Sigmoid colon (tissue), 7 donors: ENCODE measurements at regions of chr1 and their contacts with region 1.

Region 1: GRCh38 chr1:63615768-63616420 is 22.7 kb downstream of the PGM1 start:
- DNase-seq: peak; percentile 73
- H3K4me3 ChIP-seq: no peak overlapping the region
- H3K27ac ChIP-seq: no peak overlapping the region
- H3K4me1 ChIP-seq: peaks cover 0 to 17% (median 4%) of the 10 kb centered on the region in 4 donors
- H3K27me3 ChIP-seq: no peaks in the 10 kb centered on the region
- CTCF ChIP-seq: peak; percentile 48 to 77 (median 72)
- EP300 ChIP-seq: no peak
- POLR2A ChIP-seq: no peak

Region 2: GRCh38 chr1:63522891-63523728 is 92.8 kb before region 1 on chr1 and contains the starts of genes EFCAB7 and ITGB3BP:
- intact Hi-C with region 1: no loop called
- DNase-seq: peak; percentile 93
- H3K4me3 ChIP-seq: peak within 1 kb of the TSS; percentile 65 to 70 (median 66)
- H3K27ac ChIP-seq: peak within 1 kb of the TSS; percentile 86 to 92 (median 90)
- H3K4me1 ChIP-seq: peaks cover 0 to 20% (median 19%) of the 10 kb centered on the region in 4 donors
- H3K27me3 ChIP-seq: no peaks in the 10 kb centered on the region
- CTCF ChIP-seq: no peak
- EP300 ChIP-seq: no peak
- POLR2A ChIP-seq: no peak
- total RNA-seq, gene EFCAB7: 6.9 to 12.8 (median 10.4) TPM
- total RNA-seq, gene ITGB3BP: 9.4 to 25.3 (median 15.1) TPM

Region 3: DNA sequence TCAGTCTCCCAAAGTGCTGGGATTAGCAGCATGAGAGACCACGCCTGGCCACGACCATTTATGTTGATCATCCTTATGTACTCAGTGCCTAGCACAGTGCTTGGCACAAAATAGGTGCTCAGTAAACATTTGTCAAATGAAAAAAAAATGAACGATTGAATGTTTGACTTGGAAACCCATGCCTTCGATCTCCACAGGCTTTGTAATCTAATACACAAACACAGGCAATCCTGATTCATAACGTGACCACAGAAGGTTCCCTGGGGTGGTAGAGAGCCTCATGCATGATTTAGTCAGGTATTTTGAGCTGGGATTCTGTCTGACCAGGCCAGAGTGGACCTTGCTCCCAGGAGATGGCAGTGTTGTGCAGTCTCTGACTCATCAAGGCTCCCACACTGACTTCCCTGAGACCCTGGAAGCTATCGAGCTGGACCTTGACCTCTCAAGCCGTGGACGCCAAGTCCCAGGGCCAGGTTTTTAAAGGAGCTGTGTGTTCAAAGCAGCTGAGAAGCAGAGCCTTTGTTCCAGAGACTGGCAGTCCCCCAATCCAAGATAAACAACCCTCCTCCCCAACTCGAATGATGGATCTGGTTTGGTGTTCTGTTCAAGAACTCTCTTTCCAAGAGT is 58.5 kb after region 1 on chr1:
- intact Hi-C with region 1: loop called (anchors 5 kb)
- DNase-seq: peak; percentile 96
- H3K4me3 ChIP-seq: no peak overlapping the region
- H3K27ac ChIP-seq: peak overlapping the region in 3 of 4 donors; percentile 1 to 61 (median 56)
- H3K4me1 ChIP-seq: peaks cover 0 to 19% (median 12%) of the 10 kb centered on the region in 4 donors
- H3K27me3 ChIP-seq: no peaks in the 10 kb centered on the region
- CTCF ChIP-seq: peak; percentile 57 to 70 (median 68)
- EP300 ChIP-seq: no peak
- POLR2A ChIP-seq: no peak

Region 4: DNA sequence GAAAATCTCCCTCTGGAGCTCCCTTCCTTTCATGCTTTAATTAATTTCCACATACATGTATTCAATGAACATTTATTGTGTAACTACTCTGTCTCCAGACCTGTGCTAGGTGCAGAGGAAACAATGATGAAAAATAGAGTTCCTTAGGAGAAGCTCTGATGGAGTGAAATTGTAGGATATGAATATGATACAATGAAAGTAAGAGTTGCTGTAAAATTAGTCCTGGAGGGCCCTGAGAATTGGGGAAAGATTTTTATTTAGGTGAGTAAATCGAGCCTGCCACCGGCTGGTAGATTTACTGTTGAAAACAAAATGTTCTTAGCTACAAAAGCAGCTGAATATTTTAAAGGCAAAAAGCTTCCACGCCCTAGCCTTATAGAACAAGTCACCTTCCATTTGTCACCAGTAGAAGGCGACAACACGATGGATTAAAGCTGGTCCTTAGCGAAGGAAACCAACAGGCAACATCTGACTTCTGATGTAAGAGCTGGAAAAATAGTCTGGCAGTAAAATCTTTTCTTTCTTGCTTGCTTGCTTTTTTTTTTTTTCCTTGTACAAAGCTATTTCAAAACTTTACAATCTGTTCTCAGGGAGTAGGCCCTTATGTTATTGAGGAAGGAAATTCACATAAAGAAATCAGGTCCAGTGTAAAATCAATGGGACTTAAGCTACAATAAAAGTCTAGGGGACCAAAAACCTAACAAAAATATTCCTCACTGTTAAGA is 76.0 kb after region 1 on chr1:
- intact Hi-C with region 1: loop called (anchors 5 kb)
- DNase-seq: peak; percentile 84
- H3K4me3 ChIP-seq: no peak overlapping the region
- H3K27ac ChIP-seq: peak overlapping the region in 3 of 4 donors; percentile 57 to 74 (median 60)
- H3K4me1 ChIP-seq: peaks cover 0 to 30% (median 20%) of the 10 kb centered on the region in 4 donors
- H3K27me3 ChIP-seq: no peaks in the 10 kb centered on the region
- CTCF ChIP-seq: peak; percentile 62 to 82 (median 68)
- EP300 ChIP-seq: peak in 1 of 4 donors; percentile 38
- POLR2A ChIP-seq: no peak

Region 5: GRCh38 chr1:64242895-64243756 is 627.2 kb after region 1 on chr1:
- intact Hi-C with region 1: loop called (anchors 1 kb)
- DNase-seq: no peak
- H3K4me3 ChIP-seq: no peak overlapping the region
- H3K27ac ChIP-seq: no peak overlapping the region
- H3K4me1 ChIP-seq: peaks cover 0 to 3% (median 0%) of the 10 kb centered on the region in 4 donors
- H3K27me3 ChIP-seq: no peaks in the 10 kb centered on the region
- CTCF ChIP-seq: peak in 3 of 4 experiments; percentile 29 to 62 (median 45)
- EP300 ChIP-seq: no peak
- POLR2A ChIP-seq: no peak